ENCODE measurements at regions of chr3 and their contacts with region 1.

Region 1: GRCh38 chr3:124007186-124007585 is 15.3 kb upstream of the ROPN1 start:
- ATAC-seq: no peak
- H3K4me3 ChIP-seq: no peak overlapping the region
- H3K27ac ChIP-seq: no peak overlapping the region
- H3K4me1 ChIP-seq: no peaks in the 10 kb centered on the region

Region 2: GRCh38 chr3:123818921-123819429 is 188.2 kb before region 1 on chr3:
- in situ Hi-C with region 1: no loop called
- ATAC-seq: peak in 5 of 8 experiments; percentile 21 to 96 (median 40)
- H3K4me3 ChIP-seq: no peak overlapping the region
- H3K27ac ChIP-seq: no peak overlapping the region
- H3K4me1 ChIP-seq: peaks cover 0 to 3% of the 10 kb centered on the region in 2 donors

Region 3: GRCh38 chr3:124281453-124282316 is 274.5 kb after region 1 on chr3:
- in situ Hi-C with region 1: loop called in 1 of 9 experiments (anchors 25 kb)
- ATAC-seq: peak; percentile 33 to 87 (median 74)
- H3K4me3 ChIP-seq: no peak overlapping the region
- H3K27ac ChIP-seq: no peak overlapping the region
- H3K4me1 ChIP-seq: no peaks in the 10 kb centered on the region

Region 4: DNA sequence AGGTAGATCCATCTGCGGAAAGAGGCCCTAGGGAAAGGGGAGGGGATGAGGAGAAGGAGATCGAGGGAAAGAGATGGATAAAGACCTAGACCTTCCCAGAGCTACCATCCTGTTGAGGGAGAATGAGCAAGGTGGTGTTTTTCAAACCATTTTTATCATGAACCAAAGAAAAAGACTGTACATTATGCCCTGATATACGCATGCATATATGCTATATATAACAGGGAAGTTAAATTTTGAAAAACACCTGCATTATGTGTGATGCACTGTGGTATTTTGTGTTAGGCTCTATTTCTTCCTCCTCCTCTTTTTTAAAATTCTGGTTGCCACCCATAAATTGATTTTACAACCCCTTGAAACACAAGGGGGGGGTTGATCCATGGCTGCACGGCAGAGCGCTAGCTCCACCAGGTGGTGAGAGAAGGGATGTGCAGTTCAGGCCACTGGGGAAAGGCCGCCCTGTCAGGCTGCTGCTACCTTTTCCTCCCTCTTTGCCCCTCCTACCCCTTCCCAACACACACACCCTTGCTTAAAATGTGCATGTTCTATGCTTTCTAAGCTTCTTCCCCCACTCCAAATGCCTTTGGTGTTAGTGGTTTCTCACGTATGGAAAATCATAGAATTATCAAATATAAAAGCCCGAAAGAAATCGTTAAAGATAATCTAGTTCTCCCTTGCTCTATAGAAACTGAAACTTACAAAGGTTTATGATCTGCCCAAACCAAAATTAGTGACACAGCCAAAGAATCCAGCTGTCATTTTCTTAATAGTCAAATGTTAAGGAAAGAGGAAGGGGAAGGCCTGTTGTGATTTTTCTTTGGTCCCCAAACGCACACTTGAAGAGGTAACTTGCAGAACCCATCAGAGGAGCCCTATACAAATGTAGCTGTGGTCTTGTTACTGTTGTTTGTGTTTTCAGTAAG is 461.1 kb after region 1 on chr3:
- in situ Hi-C with region 1: loop called in 3 of 9 experiments (anchors 25 kb)
- ATAC-seq: peak; percentile 69 to 99 (median 84)
- H3K4me3 ChIP-seq: no peak overlapping the region
- H3K27ac ChIP-seq: no peak overlapping the region
- H3K4me1 ChIP-seq: peaks cover 0 to 2% of the 10 kb centered on the region in 2 donors

Region 5: DNA sequence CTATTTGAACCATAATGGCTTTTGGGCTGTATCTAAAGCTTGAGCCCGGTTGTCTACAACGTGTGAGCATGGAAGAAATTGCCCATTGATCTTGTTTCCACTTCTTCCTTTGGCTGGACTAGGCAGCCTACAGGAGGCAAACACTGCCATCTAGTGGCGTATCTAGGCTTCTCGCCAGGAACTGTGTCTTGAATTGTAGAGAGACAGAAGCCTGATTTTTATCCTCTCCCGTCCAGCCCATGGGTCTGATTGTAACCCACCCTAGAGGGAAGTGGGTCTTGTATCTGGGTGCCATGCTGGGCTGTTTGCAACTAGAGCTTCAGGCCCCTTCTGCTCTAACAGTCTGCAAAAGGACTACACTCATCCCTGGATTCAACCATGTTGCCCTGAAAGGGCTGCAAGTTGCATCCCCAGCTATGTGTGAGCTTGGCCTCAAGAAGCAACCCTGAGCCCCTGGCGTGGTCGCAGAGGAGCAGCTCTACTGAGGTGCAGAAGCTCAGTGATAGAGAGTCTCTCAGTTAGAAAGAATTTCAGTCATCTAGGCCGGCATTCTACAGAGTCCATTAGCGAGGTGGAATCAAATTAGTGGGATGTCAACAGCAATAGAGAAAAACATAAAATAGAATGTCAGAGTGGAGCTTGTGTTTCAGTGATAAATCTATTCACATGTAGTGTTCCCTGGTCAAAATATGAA is 552.8 kb after region 1 on chr3:
- in situ Hi-C with region 1: loop called in 1 of 9 experiments (anchors 25 kb)
- ATAC-seq: peak; percentile 30 to 88 (median 81)
- H3K4me3 ChIP-seq: no peak overlapping the region
- H3K27ac ChIP-seq: no peak overlapping the region
- H3K4me1 ChIP-seq: peaks cover 0 to under 1% of the 10 kb centered on the region in 2 donors

Measured in motor neuron (in vitro differentiated cells).